Activated T-helper 1 cell treated with anti-CD3 and anti-CD28 coated beads, Interleukin-12 subunit alpha, Interleukin-12 subunit beta, Interleukin-2, Interleukin-4 antibody, amounts not matched to agents 30 ng/mL and 10 ng/mL and 1 ng/mL, durations not matched to agents 14 hours and 24 hours and 36 hours (primary cell): ENCODE measurements at regions of chr2 and their contacts with region 1.

Region 1: GRCh38 chr2:132267105-132267497 is 105.3 kb upstream of the ANKRD30BL start:
- DNase-seq: no peak
- H3K4me3 Mint-ChIP-seq: no peak overlapping the region
- H3K27ac Mint-ChIP-seq: no peak overlapping the region
- H3K4me1 Mint-ChIP-seq: no peaks in the 10 kb centered on the region
- H3K27me3 Mint-ChIP-seq: no peaks in the 10 kb centered on the region

Region 2: DNA sequence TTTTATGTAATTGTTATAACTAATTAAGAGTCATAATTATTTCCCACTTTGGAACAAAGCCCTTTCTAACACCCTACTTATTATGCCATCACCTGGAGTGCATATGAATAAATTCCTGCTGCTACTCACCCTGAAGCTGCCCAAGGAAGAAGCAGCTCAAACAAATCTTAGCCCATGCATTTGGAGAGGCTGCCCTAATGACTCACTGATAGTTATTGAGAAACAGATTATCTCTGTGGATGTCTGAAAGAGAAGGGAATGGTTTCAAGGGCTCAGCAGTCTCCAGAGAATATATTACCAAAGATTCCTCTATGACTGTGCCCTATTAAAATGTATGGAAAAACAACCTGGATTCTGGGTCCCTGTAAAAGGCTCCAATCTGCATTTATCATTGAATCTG is 230.5 kb after region 1 on chr2:
- intact Hi-C with region 1: no loop called
- DNase-seq: no peak
- H3K4me3 Mint-ChIP-seq: no peak overlapping the region
- H3K27ac Mint-ChIP-seq: no peak overlapping the region
- H3K4me1 Mint-ChIP-seq: no peaks in the 10 kb centered on the region
- H3K27me3 Mint-ChIP-seq: no peaks in the 10 kb centered on the region

Region 3: GRCh38 chr2:132547074-132547687 is 280.1 kb after region 1 on chr2:
- intact Hi-C with region 1: loop called (anchors 1 kb)
- DNase-seq: peak; percentile 9
- H3K4me3 Mint-ChIP-seq: no peak overlapping the region
- H3K27ac Mint-ChIP-seq: no peak overlapping the region
- H3K4me1 Mint-ChIP-seq: no peaks in the 10 kb centered on the region
- H3K27me3 Mint-ChIP-seq: no peaks in the 10 kb centered on the region

Region 4: DNA sequence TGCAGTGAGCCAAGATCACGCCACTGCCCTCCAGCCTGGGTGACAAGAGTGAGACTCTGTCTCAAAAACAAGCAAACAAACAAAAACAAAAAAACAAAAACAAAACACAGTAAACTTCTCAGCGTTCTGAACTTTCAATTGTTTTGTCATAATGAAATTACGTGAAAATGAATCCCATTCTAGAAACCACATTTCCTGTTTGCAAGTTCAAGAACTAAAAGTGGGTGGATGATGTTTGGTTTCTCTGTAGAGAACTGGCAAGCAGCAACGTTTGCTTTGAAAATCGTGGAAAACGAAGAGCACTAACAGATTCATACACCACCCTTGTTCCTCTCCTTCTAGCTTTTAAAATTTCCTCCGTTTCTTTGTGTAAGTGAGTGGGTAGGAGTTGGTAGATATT is 629.0 kb after region 1 on chr2:
- intact Hi-C with region 1: loop called (anchors 5 kb)
- DNase-seq: no peak
- H3K4me3 Mint-ChIP-seq: peak overlapping the region; percentile 40
- H3K27ac Mint-ChIP-seq: peak overlapping the region; percentile 56
- H3K4me1 Mint-ChIP-seq: peaks cover 15% of the 10 kb centered on the region
- H3K27me3 Mint-ChIP-seq: no peaks in the 10 kb centered on the region

Region 5: DNA sequence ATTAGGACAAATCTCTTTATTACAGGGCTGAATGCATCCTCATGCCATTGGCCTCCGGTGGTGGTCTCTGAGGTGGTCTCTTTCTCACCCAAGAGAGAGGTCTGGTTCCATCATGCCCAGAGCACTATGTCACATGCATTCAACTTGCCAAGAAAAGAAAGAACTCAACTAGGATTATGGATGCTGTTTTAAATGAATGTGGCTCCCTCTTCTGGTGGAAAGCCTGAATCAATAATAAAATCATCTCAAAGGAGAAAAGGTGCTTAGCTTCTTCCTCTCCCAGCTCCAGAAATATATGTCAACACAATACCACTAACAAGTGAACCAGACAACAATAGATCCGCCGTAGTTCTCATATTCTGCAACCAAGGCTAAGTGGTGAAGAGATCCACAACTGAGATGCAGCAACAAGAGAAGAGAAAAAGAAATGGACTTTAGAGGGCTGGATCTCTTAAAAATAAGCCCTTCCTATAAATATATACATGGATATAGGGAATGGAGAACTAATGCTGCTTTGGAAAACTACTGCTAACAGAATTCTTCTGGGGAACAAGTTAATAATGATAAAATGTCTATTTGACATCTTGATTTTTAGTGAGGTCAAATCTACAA is 904.4 kb after region 1 on chr2:
- intact Hi-C with region 1: loop called (anchors 2 kb)
- DNase-seq: no peak
- H3K4me3 Mint-ChIP-seq: no peak overlapping the region
- H3K27ac Mint-ChIP-seq: no peak overlapping the region
- H3K4me1 Mint-ChIP-seq: no peaks in the 10 kb centered on the region
- H3K27me3 Mint-ChIP-seq: no peaks in the 10 kb centered on the region

Region 6: DNA sequence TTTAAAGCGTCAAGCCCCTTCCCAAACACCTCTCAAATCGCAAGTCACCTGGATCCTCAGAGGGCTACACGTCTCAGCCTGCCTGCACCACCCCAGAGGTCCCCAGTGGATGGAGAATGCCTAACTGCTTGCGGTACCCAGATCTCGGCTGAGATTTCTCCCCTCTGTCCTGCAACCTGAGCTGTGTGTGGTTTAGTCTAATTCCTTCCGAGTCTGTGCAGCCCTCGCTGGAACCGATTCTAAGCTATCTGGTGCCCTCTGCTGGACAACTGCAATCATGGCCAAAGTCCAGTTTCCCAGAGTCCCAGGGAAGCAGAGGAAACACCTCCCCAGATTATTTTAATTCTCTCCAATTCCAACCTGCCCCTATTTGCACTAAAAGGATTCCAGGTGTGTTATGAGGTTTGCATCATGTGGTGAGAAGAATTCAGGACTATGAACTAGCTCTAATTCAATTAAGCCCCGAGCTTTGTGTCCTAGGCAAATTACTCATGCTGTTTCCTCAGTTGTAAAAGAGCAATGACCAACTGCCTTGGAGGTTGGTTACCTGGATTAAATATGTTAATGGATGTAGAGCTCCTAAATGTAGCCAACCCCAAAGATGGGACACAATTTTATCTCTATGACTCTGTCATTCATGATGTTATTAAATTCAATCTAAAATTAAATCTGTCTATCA is 1577.3 kb after region 1 on chr2:
- intact Hi-C with region 1: loop called (anchors 5 kb)
- DNase-seq: peak; percentile 14
- H3K4me3 Mint-ChIP-seq: no peak overlapping the region
- H3K27ac Mint-ChIP-seq: no peak overlapping the region
- H3K4me1 Mint-ChIP-seq: no peaks in the 10 kb centered on the region
- H3K27me3 Mint-ChIP-seq: peaks cover 12% of the 10 kb centered on the region